ENCODE measurements at regions of chr18 and their contacts with region 1.

Region 1: GRCh38 chr18:8960740-8961657 is 141.5 kb upstream of the NDUFV2 start:
- DNase-seq: peak; percentile 67
- H3K4me3 Mint-ChIP-seq: no peak overlapping the region
- H3K27ac Mint-ChIP-seq: peak overlapping the region; percentile 71
- H3K4me1 Mint-ChIP-seq: peaks cover 9% of the 10 kb centered on the region
- H3K27me3 Mint-ChIP-seq: no peaks in the 10 kb centered on the region
- CTCF ChIP-seq: no peak

Region 2: GRCh38 chr18:8890957-8891464 is 70.0 kb before region 1 on chr18:
- CTCF ChIA-PET with region 1: no interaction called
- POLR2A ChIA-PET with region 1: no interaction called
- intact Hi-C with region 1: loop called (anchors 1 kb)
- DNase-seq: peak; percentile 80
- H3K4me3 Mint-ChIP-seq: no peak overlapping the region
- H3K27ac Mint-ChIP-seq: peak overlapping the region; percentile 7
- H3K4me1 Mint-ChIP-seq: peaks cover 6% of the 10 kb centered on the region
- H3K27me3 Mint-ChIP-seq: no peaks in the 10 kb centered on the region
- CTCF ChIP-seq: no peak

Region 3: GRCh38 chr18:9629709-9630108 is 668.7 kb after region 1 on chr18:
- CTCF ChIA-PET with region 1: no interaction called
- POLR2A ChIA-PET with region 1: no interaction called
- intact Hi-C with region 1: no loop called
- DNase-seq: no peak
- H3K4me3 Mint-ChIP-seq: no peak overlapping the region
- H3K27ac Mint-ChIP-seq: no peak overlapping the region
- H3K4me1 Mint-ChIP-seq: peaks cover 10% of the 10 kb centered on the region
- H3K27me3 Mint-ChIP-seq: no peaks in the 10 kb centered on the region
- CTCF ChIP-seq: no peak